CD8-positive, alpha-beta T cell (primary cell): ENCODE measurements at regions of chr12 and their contacts with region 1.

Region 1: GRCh38 chr12:101839324-101840283 is 8.8 kb upstream of the GNPTAB start:
- DNase-seq: peak; percentile 47 to 85 (median 73)
- ATAC-seq: peak; percentile 87
- H3K4me3 ChIP-seq: no peak overlapping the region
- H3K4me3 Mint-ChIP-seq: no peak overlapping the region
- H3K27ac ChIP-seq: no peak overlapping the region
- H3K27ac Mint-ChIP-seq: no peak overlapping the region
- H3K4me1 ChIP-seq: peaks cover 12% of the 10 kb centered on the region
- H3K4me1 Mint-ChIP-seq: peaks cover 12% of the 10 kb centered on the region
- H3K27me3 ChIP-seq: no peaks in the 10 kb centered on the region
- H3K27me3 Mint-ChIP-seq: no peaks in the 10 kb centered on the region
- CTCF ChIP-seq: peak; percentile 93

Region 2: GRCh38 chr12:101707131-101707782 is 132.3 kb before region 1 on chr12:
- CTCF ChIA-PET with region 1: no interaction called
- POLR2A ChIA-PET with region 1: no interaction called
- intact Hi-C with region 1: no loop called
- DNase-seq: no peak
- ATAC-seq: no peak
- H3K4me3 ChIP-seq: no peak overlapping the region
- H3K4me3 Mint-ChIP-seq: no peak overlapping the region
- H3K27ac ChIP-seq: no peak overlapping the region
- H3K27ac Mint-ChIP-seq: no peak overlapping the region
- H3K4me1 ChIP-seq: peaks cover 5% of the 10 kb centered on the region
- H3K4me1 Mint-ChIP-seq: peaks cover 13% of the 10 kb centered on the region
- H3K27me3 ChIP-seq: no peaks in the 10 kb centered on the region
- H3K27me3 Mint-ChIP-seq: no peaks in the 10 kb centered on the region
- CTCF ChIP-seq: no peak

Region 3: DNA sequence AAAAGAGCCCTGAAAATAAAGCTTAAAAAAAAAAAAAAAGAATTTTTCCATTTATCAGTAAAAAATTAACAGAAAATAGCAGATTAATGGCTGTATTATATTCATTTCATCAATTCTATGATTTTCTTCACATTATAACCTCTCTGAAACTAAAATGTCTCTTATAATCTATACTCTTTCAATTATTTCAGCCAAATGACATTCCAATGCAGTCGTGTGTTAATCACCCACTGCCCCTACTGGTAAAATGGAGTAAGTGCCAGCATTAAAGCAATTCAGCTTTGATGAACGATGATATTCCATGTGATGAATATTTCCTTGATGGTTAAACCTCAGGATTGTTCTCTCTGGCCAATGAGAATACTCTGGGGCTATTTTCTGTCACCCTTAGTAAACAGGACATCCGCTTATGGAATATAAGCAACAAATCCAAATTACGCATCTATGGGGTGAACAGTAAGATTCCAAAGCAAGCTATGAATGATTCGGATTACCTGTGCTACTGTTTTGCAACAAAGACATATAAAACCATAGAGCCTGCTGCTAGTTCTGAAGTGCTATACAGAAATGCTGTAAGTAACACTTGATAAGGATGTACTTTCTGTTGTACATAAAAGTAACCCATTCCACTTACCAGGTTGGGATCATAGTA is 80.1 kb before region 1 on chr12:
- CTCF ChIA-PET with region 1: interaction called, 15 read pairs
- POLR2A ChIA-PET with region 1: no interaction called
- intact Hi-C with region 1: no loop called
- DNase-seq: peak in 2 of 9 experiments; percentile 44 to 57
- ATAC-seq: peak; percentile 62
- H3K4me3 ChIP-seq: no peak overlapping the region
- H3K4me3 Mint-ChIP-seq: no peak overlapping the region
- H3K27ac ChIP-seq: no peak overlapping the region
- H3K27ac Mint-ChIP-seq: no peak overlapping the region
- H3K4me1 ChIP-seq: no peaks in the 10 kb centered on the region
- H3K4me1 Mint-ChIP-seq: peaks cover 2% of the 10 kb centered on the region
- H3K27me3 ChIP-seq: no peaks in the 10 kb centered on the region
- H3K27me3 Mint-ChIP-seq: no peaks in the 10 kb centered on the region
- CTCF ChIP-seq: peak; percentile 94

Region 4: DNA sequence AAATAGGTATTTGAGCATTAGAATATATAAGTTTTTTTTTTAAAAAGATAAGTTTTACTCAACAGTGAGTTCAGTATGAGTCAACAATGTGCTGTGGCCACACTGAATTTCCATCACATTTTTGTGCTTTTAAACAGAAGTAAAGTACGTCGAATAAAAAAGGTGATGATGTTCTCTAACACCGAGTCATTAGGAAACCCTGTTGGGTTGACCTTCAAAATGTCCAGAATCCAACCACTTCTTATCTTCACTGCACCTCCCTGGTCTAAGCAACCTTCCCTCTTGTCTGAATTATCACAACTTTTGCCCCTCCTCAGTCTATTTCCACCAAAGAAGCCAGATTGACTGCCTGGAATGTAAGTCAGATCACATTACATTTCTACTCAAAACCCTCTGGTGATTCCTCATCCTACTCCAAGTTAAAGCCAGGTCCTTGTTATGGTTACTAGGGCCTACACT is 57.3 kb before region 1 on chr12:
- CTCF ChIA-PET with region 1: interaction called, 25 read pairs
- POLR2A ChIA-PET with region 1: interaction called, 3 read pairs
- intact Hi-C with region 1: no loop called
- DNase-seq: no peak
- ATAC-seq: no peak
- H3K4me3 ChIP-seq: no peak overlapping the region
- H3K4me3 Mint-ChIP-seq: no peak overlapping the region
- H3K27ac ChIP-seq: no peak overlapping the region
- H3K27ac Mint-ChIP-seq: peak overlapping the region; percentile 27
- H3K4me1 ChIP-seq: no peaks in the 10 kb centered on the region
- H3K4me1 Mint-ChIP-seq: no peaks in the 10 kb centered on the region
- H3K27me3 ChIP-seq: no peaks in the 10 kb centered on the region
- H3K27me3 Mint-ChIP-seq: no peaks in the 10 kb centered on the region
- CTCF ChIP-seq: no peak

Region 5: DNA sequence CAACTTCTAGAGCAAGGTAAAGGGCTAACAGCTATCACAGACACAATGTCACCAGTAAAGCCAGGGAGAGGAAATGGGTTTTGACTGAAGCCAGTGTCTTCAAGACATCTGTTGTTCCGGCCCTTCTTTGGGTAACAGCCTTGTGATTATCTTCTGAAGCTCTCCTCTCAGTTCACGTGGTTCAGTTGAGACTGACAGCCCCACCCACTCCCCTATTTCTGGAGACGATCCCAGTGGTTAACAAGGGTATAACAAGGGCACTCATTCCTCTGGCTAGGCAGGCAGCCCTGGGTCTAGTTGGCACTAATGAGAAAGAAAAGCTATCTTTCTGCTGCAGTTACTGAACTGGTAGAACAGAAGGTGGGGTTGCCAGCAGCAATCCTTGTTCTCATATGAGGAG is 15.7 kb before region 1 on chr12:
- CTCF ChIA-PET with region 1: interaction called, 51 read pairs
- POLR2A ChIA-PET with region 1: interaction called, 3 read pairs
- intact Hi-C with region 1: loop called in 1 of 2 experiments (anchors 2 kb)
- DNase-seq: peak; percentile 47 to 92 (median 69)
- ATAC-seq: peak; percentile 99
- H3K4me3 ChIP-seq: no peak overlapping the region
- H3K4me3 Mint-ChIP-seq: peak overlapping the region; percentile 63
- H3K27ac ChIP-seq: peak overlapping the region in 1 of 2 experiments; percentile 53
- H3K27ac Mint-ChIP-seq: peak overlapping the region; percentile 86
- H3K4me1 ChIP-seq: peaks cover 46% of the 10 kb centered on the region
- H3K4me1 Mint-ChIP-seq: peaks cover 77% of the 10 kb centered on the region
- H3K27me3 ChIP-seq: no peaks in the 10 kb centered on the region
- H3K27me3 Mint-ChIP-seq: no peaks in the 10 kb centered on the region
- CTCF ChIP-seq: peak; percentile 64